Colonic mucosa (tissue), 4 donors: ENCODE measurements at regions of chr5 and their contacts with region 1.

Region 1: GRCh38 chr5:18699681-18700080 is 1065.4 kb downstream of the TAF11L14 start:
- DNase-seq: no peak
- H3K4me3 ChIP-seq: no peak overlapping the region
- H3K27ac ChIP-seq: no peak overlapping the region
- H3K4me1 ChIP-seq: no peaks in the 10 kb centered on the region
- H3K27me3 ChIP-seq: no peaks in the 10 kb centered on the region
- CTCF ChIP-seq: no peak

Region 2: DNA sequence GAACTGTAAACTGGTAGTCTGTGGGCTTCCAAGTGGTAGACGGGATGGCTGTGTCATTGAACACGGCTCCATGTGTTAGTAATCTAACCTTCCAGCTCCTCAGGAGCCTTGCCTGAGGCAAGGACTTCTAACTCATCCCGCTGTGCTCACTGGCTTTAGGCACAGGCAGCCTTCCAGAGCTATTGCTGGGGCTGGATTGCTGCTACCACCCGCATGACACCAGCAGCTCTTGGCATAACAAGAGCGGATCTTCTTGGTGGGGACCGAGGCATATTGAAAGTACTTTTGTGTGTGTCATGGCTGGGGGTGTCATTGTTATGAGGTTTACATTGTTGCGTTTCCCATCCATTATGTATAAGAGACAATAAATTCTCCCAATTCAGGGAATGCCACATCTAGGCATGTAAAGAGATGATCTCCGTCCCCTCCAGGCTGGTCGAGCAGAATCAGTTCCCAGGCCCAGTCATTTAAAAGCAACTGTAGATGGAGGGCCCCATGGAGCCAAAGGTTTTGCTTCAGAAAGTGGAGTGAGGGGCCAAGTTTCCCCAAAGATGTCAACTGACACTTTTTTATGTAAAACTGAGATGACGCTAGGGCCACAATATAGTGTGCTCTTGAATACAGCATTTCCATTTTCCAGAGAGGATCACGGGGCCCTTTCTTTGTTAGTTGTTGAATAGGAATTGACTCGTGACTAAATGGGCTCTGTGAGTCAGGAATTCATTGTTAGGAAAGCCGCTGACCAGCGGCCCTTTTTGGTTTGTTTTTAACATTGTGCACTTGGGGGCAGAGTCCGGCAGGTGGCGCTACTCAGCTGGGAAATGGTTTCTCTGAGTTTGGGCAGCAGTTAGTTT is 305.9 kb before region 1 on chr5:
- intact Hi-C with region 1: loop called (anchors 2 kb)
- DNase-seq: peak; percentile 49
- H3K4me3 ChIP-seq: no peak overlapping the region
- H3K27ac ChIP-seq: no peak overlapping the region
- H3K4me1 ChIP-seq: no peaks in the 10 kb centered on the region
- H3K27me3 ChIP-seq: no peaks in the 10 kb centered on the region
- CTCF ChIP-seq: peak; percentile 74

Region 3: DNA sequence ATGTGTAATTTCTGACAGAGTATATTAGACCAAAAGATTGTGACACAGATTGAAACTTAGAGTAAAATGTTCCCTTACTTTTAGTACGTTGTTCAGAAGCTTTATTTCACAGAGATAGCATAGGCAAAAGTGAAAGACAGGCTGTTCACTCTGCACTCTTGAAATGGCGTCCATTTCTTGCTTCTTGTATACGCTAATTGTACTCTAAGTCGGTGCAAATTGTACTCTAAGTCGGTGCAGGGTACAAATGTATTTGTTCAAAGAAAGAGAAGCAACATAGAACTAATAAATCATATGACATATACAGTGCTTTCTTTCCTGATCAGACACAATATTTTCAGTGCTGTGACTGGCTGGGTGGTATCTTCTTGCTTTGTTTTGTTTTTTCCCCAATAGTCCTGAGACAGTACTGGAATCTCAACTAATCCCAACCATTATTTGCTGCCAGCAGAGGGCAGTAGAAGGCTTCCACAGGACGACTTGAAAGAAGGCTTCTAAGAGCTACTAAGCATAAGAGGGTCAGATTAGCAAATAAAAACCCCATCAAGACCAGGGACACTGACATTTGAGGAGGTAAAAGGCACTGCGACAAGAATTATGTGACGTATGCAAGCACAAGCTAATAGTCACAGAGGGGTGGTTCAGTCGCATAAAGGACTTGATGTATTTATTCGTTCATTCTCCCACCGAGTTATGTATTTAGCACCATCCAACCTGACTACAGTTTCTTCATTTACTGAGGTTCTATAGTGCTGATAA is 233.7 kb before region 1 on chr5:
- intact Hi-C with region 1: loop called (anchors 5 kb)
- DNase-seq: peak; percentile 49
- H3K4me3 ChIP-seq: no peak overlapping the region
- H3K27ac ChIP-seq: no peak overlapping the region
- H3K4me1 ChIP-seq: no peaks in the 10 kb centered on the region
- H3K27me3 ChIP-seq: no peaks in the 10 kb centered on the region
- CTCF ChIP-seq: peak; percentile 60